ENCODE measurements at regions of chr9 and their contacts with region 1.

Region 1: GRCh38 chr9:95907794-95908193 is 32.3 kb downstream of the ERCC6L2 start:
- DNase-seq: no peak
- ATAC-seq: no peak
- H3K4me3 ChIP-seq: no peak overlapping the region
- H3K27ac ChIP-seq: no peak overlapping the region
- H3K4me1 ChIP-seq: no peaks in the 10 kb centered on the region
- H3K27me3 ChIP-seq: no peaks in the 10 kb centered on the region
- CTCF ChIP-seq: no peak
- POLR2A ChIP-seq: no peak

Region 2: DNA sequence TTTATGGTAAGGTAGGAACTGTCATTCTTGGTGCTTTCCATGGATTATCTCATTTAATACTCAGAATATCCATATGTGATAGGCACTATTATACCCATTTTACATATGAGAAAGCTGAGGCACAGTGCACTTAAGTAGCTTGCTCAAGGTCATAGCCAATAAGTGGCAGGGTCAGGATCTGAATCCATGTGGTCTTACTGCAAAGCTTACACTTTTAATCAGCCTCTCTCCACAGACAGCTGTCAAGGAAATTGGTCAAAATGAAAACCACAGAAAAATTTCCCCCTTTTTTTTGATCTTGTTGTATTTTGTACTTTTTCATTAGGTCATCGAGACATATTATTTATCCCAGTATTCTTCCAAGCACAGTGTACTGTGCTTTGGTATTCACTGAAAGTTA is 46.2 kb after region 1 on chr9:
- in situ Hi-C with region 1: no loop called
- intact Hi-C with region 1: no loop called
- DNase-seq: no peak
- ATAC-seq: no peak
- H3K4me3 ChIP-seq: no peak overlapping the region
- H3K27ac ChIP-seq: no peak overlapping the region
- H3K4me1 ChIP-seq: no peaks in the 10 kb centered on the region
- H3K27me3 ChIP-seq: no peaks in the 10 kb centered on the region
- CTCF ChIP-seq: no peak
- POLR2A ChIP-seq: no peak

Region 3: GRCh38 chr9:96020792-96021550 is 113.2 kb after region 1 on chr9:
- in situ Hi-C with region 1: loop called in 1 of 4 experiments (anchors 25 kb)
- intact Hi-C with region 1: no loop called
- DNase-seq: no peak
- ATAC-seq: peak in 1 of 2 donors; percentile 28
- H3K4me3 ChIP-seq: peak overlapping the region; percentile 48 to 66 (median 58)
- H3K27ac ChIP-seq: peak overlapping the region; percentile 11 to 68 (median 28)
- H3K4me1 ChIP-seq: peaks cover 5 to 13% of the 10 kb centered on the region in 2 donors
- H3K27me3 ChIP-seq: peaks cover 42 to 61% (median 56%) of the 10 kb centered on the region in 3 donors
- CTCF ChIP-seq: no peak
- POLR2A ChIP-seq: no peak

Region 4: DNA sequence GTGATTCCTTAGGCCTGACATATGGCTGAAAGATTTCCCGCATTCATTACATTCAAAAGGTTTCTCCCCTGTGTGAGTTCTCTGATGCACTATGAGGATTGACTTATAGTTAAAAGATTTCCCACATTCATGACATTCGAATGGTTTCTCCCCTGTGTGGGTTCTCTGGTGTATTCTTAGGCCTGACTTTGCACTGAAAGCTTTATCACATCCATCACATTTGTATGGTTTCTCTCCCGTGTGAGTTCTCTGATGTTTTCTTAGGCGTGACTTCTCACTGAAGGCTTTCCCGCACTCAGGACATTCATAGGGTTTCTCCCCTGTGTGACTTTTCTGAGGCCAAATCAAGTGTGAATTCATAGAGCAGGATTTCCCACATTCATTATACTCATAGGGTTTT is 910.7 kb after region 1 on chr9:
- in situ Hi-C with region 1: no loop called
- intact Hi-C with region 1: no loop called
- DNase-seq: no peak
- ATAC-seq: no peak
- H3K4me3 ChIP-seq: peak overlapping the region in 1 of 4 donors; percentile 20
- H3K27ac ChIP-seq: no peak overlapping the region
- H3K4me1 ChIP-seq: no peaks in the 10 kb centered on the region
- H3K27me3 ChIP-seq: no peaks in the 10 kb centered on the region
- CTCF ChIP-seq: no peak
- POLR2A ChIP-seq: no peak

Measured in gastrocnemius medialis (tissue), 4 donors.